Mammary epithelial cell (primary cell): ENCODE measurements at regions of chr7 and their contacts with region 1.

Region 1: DNA sequence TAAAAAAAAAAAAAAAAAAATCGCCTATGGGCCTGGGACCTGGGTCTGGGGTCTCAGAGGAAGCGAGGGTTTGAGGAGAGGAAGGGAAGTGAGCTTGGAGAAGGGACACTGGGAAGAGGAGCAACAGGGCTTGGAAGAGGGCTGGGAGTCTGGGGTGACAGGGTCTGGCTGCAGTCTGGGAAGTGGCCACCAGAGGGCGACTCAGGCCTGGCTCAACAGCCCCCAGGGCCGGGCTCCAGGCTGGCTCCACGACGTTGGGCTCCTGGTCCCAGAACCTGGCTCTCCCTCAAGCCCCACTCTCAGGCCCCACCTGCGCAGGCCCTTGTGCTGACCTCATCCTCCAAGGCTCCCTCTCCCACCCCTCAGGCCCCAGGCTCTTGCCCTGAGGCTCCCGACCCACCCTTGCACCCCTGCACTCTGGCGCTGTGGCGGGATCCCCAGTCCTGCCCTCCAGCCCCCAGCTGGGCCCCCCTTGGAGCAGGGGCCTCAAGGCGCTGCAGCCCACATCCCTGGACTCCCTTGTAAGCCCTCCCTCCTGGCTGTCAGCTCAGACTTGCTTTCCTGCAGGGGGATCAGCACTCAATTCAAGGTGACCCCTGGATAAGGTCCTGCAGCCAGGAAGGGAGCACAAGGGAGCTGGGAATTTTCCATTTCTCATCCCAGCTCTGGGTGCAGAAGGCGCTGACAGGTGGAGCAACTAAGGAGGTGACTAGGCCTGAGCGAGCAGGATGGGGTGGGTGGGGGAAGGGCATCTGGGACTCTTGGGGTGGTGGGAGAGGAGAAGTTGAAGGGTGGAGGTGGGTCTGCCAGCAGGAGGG is 5.4 kb upstream of the SPACDR start:
- DNase-seq: peak; percentile 37
- H3K4me3 ChIP-seq: no peak overlapping the region
- H3K27ac ChIP-seq: no peak overlapping the region
- H3K4me1 ChIP-seq: peaks cover 10% of the 10 kb centered on the region
- H3K27me3 ChIP-seq: no peaks in the 10 kb centered on the region
- CTCF ChIP-seq: peak; percentile 91 to 92

Region 2: GRCh38 chr7:100556541-100556940 is 87.1 kb after region 1 on chr7:
- CTCF ChIA-PET with region 1: no interaction called
- dilution Hi-C with region 1: loop called (anchors 5 kb)
- in situ Hi-C with region 1: loop called (anchors 5 to 10 kb)
- intact Hi-C with region 1: loop called (anchors 1 kb)
- DNase-seq: no peak
- H3K4me3 ChIP-seq: no peak overlapping the region
- H3K27ac ChIP-seq: no peak overlapping the region
- H3K4me1 ChIP-seq: no peaks in the 10 kb centered on the region
- H3K27me3 ChIP-seq: no peaks in the 10 kb centered on the region
- CTCF ChIP-seq: no peak

Region 3: DNA sequence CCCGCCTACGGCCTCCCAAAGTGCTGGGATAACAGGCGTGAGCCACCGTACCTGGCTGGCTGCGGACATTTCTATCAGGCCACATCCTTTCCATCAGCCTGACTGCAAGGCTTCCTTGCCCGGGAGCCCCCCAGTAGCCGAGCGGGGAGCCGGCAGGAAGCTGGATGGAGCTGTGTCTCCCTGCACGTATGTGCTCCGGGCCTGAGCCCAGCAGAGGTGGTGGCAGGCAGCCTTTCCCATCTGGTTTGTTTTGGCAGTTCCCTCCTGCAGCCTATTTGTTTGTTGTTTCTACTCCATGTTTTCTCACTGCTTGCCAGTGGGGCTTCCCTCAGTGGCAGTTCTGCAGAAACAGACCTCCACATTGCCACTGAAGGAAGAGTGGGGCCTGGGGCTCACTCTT is 241.9 kb after region 1 on chr7:
- CTCF ChIA-PET with region 1: interaction called, 17 read pairs
- dilution Hi-C with region 1: no loop called
- in situ Hi-C with region 1: no loop called
- intact Hi-C with region 1: no loop called
- DNase-seq: no peak
- H3K4me3 ChIP-seq: no peak overlapping the region
- H3K27ac ChIP-seq: no peak overlapping the region
- H3K4me1 ChIP-seq: peaks cover 8% of the 10 kb centered on the region
- H3K27me3 ChIP-seq: no peaks in the 10 kb centered on the region
- CTCF ChIP-seq: no peak

Region 4: GRCh38 chr7:100874577-100875355 is 405.3 kb after region 1 on chr7 and contains the start of gene SRRT:
- CTCF ChIA-PET with region 1: no interaction called
- dilution Hi-C with region 1: no loop called
- in situ Hi-C with region 1: loop called in 1 of 2 experiments (anchors 25 kb)
- intact Hi-C with region 1: no loop called
- DNase-seq: peak; percentile 97
- H3K4me3 ChIP-seq: peak within 1 kb of the TSS; percentile 76 to 92 (median 89)
- H3K27ac ChIP-seq: peak within 1 kb of the TSS; percentile 79
- H3K4me1 ChIP-seq: peaks cover 21% of the 10 kb centered on the region
- H3K27me3 ChIP-seq: no peaks in the 10 kb centered on the region
- CTCF ChIP-seq: peak in 1 of 2 donors; percentile 39
- total RNA-seq, gene SRRT: 29.5 to 127 TPM

Region 5: DNA sequence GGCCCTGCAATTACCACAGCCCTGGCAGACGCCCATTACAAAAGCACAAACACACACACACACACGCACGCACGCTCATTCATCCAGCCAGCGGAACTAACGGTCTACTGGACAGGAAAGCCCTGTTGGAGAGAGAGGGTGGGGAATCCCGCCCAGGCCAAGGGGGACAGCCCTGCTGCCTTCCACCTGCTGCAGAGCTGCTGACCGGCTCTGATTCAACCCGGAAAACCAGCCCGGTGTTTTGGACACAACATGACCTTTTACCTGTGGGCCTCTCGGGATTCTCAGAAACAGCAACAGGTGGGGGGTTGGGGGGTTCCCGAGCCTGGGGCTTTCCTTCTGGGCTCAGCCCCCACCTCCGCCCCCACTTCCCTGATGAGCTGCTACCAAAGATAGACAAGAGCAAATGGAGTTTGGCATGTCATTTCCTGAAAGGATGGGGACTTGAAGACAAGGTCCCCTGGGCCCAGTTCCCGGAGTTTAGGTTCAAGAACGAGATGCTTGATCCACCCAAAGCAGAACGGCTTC is 639.0 kb after region 1 on chr7:
- CTCF ChIA-PET with region 1: no interaction called
- dilution Hi-C with region 1: no loop called
- in situ Hi-C with region 1: no loop called
- intact Hi-C with region 1: no loop called
- DNase-seq: peak; percentile 38
- H3K4me3 ChIP-seq: no peak overlapping the region
- H3K27ac ChIP-seq: peak overlapping the region; percentile 87
- H3K4me1 ChIP-seq: peaks cover 22% of the 10 kb centered on the region
- H3K27me3 ChIP-seq: no peaks in the 10 kb centered on the region
- CTCF ChIP-seq: no peak